Activated CD4-positive, alpha-beta T cell treated with anti-CD3 and anti-CD28 coated beads, Interleukin-2, amount 10 ng/mL, durations not matched to agents 24 days and 14 days (primary cell): ENCODE measurements at regions of chr11 and their contacts with region 1.

Region 1: GRCh38 chr11:64846998-64847666 is 2.7 kb upstream of the CDC42BPG start:
- DNase-seq: peak; percentile 97
- H3K4me3 Mint-ChIP-seq: no peak overlapping the region
- H3K27ac Mint-ChIP-seq: no peak overlapping the region
- H3K4me1 Mint-ChIP-seq: peaks cover 46% of the 10 kb centered on the region
- H3K27me3 Mint-ChIP-seq: peaks cover 2% of the 10 kb centered on the region

Region 2: DNA sequence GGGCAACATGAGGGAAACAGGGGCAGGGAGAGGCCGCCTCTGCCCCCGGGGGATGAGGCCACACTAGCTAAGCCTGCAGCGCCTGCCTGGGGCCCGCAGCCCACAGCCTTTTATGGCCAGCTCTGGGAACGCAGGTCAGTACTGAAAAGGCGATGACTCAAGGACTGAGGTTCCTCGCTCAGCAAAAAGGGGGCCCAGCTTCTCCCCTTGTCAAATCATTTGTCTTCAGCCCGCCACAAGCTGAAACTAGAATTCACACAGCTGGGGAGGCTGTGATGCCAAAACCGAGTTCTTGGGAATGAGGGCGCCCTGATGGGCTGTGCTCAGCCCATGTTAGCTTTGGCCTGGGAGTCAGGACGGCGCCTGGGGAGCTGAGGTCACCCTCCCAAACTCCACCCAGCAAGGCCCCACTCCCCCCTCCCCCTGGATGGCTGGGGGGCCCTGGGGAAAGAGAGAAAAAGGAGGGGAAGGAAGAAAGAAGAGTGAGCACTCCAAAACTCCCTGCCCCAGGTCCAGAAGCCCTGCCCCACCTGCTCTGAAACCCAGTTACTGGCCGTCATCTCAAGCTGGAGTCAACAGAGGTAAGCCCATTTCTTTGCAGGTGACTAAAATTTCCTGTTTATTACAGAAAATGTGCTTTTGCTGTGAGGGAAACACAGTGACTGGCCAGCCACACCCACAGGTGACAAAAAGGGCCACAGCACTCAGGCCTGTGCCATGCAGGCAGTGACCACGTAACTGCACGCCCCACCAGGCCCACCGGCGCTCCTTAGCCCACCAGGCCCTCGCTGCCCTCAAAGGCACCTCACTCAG is 17.5 kb after region 1 on chr11:
- intact Hi-C with region 1: loop called (anchors 1 kb)
- DNase-seq: peak; percentile 72
- H3K4me3 Mint-ChIP-seq: peak overlapping the region; percentile 76
- H3K27ac Mint-ChIP-seq: peak overlapping the region; percentile 95
- H3K4me1 Mint-ChIP-seq: peaks cover 76% of the 10 kb centered on the region
- H3K27me3 Mint-ChIP-seq: no peaks in the 10 kb centered on the region

Region 3: DNA sequence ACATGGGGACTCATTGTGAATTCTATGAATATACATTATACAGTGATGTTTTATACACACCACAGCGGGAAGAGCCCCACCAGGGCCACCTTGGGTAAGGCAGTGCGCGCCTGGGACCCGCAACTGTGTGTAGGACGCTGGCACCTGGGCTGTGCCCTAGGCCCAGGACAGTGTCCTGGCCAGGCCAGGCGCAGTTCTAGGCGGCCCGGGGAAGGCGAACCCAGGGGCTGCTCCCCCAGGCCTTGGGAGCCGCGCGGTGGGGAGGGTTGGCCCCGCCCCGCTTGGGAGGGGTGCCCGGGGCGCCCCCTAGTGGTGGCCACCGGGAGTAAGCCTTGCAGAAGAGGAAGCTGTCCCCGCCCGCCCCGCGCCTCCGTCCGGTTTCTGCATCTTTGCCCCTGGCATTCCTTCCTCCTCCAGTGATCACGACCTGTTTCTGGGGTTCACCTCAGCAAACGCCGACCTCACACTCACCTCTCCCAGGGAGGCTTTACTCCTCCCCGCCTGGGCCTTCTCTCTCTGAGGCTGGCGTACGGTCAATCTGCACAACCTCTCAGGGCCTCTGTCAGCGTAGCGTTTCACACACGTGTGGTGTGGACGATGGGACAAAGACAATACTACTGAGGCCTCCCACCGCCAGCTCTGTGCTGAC is 40.7 kb after region 1 on chr11:
- intact Hi-C with region 1: loop called (anchors 1 kb)
- DNase-seq: peak; percentile 96
- H3K4me3 Mint-ChIP-seq: peak overlapping the region; percentile 73
- H3K27ac Mint-ChIP-seq: peak overlapping the region; percentile 91
- H3K4me1 Mint-ChIP-seq: peaks cover 30% of the 10 kb centered on the region
- H3K27me3 Mint-ChIP-seq: no peaks in the 10 kb centered on the region

Region 4: GRCh38 chr11:64894070-64894796 is 47.1 kb after region 1 on chr11:
- intact Hi-C with region 1: loop called (anchors 1 kb)
- DNase-seq: peak; percentile 97
- H3K4me3 Mint-ChIP-seq: no peak overlapping the region
- H3K27ac Mint-ChIP-seq: no peak overlapping the region
- H3K4me1 Mint-ChIP-seq: peaks cover 4% of the 10 kb centered on the region
- H3K27me3 Mint-ChIP-seq: no peaks in the 10 kb centered on the region